Calu3 (cell line): ENCODE measurements at regions of chr5 and their contacts with region 1.

Region 1: GRCh38 chr5:110757118-110757729 is 18.4 kb downstream of the SLC25A46 start:
- DNase-seq: peak; percentile 46
- H3K4me3 Mint-ChIP-seq: no peak overlapping the region
- H3K27ac Mint-ChIP-seq: no peak overlapping the region
- H3K4me1 Mint-ChIP-seq: no peaks in the 10 kb centered on the region
- H3K27me3 Mint-ChIP-seq: no peaks in the 10 kb centered on the region
- CTCF ChIP-seq: peak; percentile 68

Region 2: GRCh38 chr5:110865400-110866094 is 108.3 kb after region 1 on chr5:
- CTCF ChIA-PET with region 1: no interaction called
- intact Hi-C with region 1: loop called (anchors 5 kb)
- DNase-seq: peak; percentile 63
- H3K4me3 Mint-ChIP-seq: no peak overlapping the region
- H3K27ac Mint-ChIP-seq: no peak overlapping the region
- H3K4me1 Mint-ChIP-seq: no peaks in the 10 kb centered on the region
- H3K27me3 Mint-ChIP-seq: no peaks in the 10 kb centered on the region
- CTCF ChIP-seq: peak; percentile 64

Region 3: GRCh38 chr5:111063700-111064322 is 306.6 kb after region 1 on chr5:
- CTCF ChIA-PET with region 1: no interaction called
- intact Hi-C with region 1: loop called (anchors 1 kb)
- DNase-seq: peak; percentile 34
- H3K4me3 Mint-ChIP-seq: no peak overlapping the region
- H3K27ac Mint-ChIP-seq: no peak overlapping the region
- H3K4me1 Mint-ChIP-seq: no peaks in the 10 kb centered on the region
- H3K27me3 Mint-ChIP-seq: peaks cover 36% of the 10 kb centered on the region
- CTCF ChIP-seq: peak; percentile 51

Region 4: DNA sequence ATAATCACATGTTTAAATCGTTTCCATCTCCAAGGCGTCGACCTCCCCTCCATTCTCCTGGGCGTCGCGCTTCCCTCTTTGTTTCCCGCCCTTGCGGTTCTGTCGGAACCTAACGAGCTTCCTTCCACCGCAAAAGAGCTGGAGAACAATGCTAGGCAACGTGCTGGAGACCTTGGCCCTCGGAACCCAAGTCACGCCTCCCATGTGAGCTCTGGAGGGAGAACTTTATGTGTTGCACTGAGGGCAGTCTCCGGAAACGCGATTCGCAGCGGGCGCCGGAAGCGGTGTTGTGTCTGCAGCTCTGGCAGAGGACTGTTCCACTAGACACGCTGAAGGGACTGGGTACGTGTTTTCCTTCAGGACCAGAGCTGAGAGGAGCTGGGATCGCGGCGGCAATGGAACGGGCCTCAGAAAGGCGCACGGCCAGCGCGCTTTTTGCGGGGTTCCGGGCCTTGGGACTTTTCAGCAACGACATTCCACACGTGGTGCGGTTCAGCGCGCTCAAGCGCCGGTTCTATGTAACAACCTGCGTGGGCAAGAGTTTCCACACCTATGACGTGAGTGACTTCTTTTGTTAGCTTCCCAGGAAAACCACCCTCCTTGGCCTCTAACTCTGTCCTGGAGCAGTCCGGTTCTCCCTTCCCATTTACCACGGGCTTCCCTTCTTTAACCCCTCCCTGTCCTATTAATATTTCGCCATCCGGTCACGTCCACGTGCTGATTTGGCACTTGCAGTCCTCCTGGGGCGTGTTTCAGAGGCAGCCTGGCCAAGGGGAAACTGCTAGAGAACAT is 335.0 kb after region 1 on chr5 and contains the start of gene WDR36:
- CTCF ChIA-PET with region 1: no interaction called
- intact Hi-C with region 1: loop called (anchors 10 kb)
- DNase-seq: peak; percentile 93
- H3K4me3 Mint-ChIP-seq: peak within 1 kb of the TSS; percentile 99
- H3K27ac Mint-ChIP-seq: peak within 1 kb of the TSS; percentile 99
- H3K4me1 Mint-ChIP-seq: peaks cover 9% of the 10 kb centered on the region
- H3K27me3 Mint-ChIP-seq: peaks cover 12% of the 10 kb centered on the region
- CTCF ChIP-seq: no peak
- total RNA-seq, gene WDR36: 48.7 and 50.8 TPM in 2 replicates

Region 5: DNA sequence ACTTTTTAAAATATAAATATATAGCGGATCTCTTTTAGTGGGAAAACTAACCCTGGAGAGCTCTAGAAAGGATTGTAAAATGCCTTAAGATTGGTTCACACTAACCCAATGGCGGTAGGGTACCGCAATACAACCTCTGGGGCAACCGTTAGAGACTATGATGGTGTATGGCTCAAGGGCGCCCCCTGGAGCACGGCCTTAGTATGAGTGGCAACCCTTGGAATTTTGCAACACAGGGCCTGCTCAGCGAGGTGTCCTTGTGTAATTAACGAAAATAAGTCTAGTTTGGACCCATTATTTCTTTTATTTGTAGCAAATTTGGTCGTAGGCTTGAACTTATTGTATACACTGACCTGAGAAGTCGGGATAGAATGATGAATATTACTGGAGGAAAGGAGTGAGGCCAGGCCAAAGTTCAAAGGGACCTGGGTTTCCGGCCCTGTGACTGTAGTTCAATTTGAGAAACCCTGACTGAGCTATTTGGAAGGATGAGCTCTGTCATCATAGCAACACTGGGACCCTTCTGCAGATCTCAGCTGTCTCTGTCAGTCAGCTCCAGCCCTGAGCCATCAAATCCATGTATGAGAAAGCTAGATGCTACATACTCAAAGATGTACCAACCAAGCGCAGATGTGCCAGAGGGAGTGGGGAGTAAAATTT is 521.8 kb after region 1 on chr5:
- CTCF ChIA-PET with region 1: no interaction called
- intact Hi-C with region 1: loop called (anchors 10 kb)
- DNase-seq: peak; percentile 90
- H3K4me3 Mint-ChIP-seq: no peak overlapping the region
- H3K27ac Mint-ChIP-seq: no peak overlapping the region
- H3K4me1 Mint-ChIP-seq: no peaks in the 10 kb centered on the region
- H3K27me3 Mint-ChIP-seq: no peaks in the 10 kb centered on the region
- CTCF ChIP-seq: peak; percentile 96